Activated T-helper 2 cell treated with anti-CD3 and anti-CD28 coated beads, Interferon-gamma antibody, Interleukin-2, Interleukin-4, amounts not matched to agents 10 μg/mL and 5 μg/mL and 100 μg/mL, durations not matched to agents 14 hours and 24 hours and 36 hours (primary cell): ENCODE measurements at regions of chr14 and their contacts with region 1.

Region 1: DNA sequence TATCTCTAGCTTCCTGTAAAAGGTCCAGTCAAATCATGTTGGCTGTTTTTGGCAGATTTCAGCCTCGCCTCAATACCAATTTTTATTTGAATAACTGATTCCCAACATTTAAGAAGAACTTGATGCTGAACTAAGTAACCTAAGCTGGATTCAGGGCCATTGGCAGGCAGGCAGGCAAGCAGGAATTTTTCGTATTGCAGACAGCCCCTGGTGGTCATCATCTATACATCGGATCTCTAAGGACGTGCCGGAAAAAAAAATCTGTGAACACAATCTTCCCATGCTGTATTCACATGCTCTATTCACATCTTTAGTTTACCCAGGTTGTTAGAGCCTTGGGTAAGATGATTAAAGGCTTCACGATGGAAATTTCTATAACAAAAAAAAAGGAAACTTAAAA is 7.0 kb downstream of the VCPKMT start:
- DNase-seq: no peak
- H3K4me3 Mint-ChIP-seq: no peak overlapping the region
- H3K27ac Mint-ChIP-seq: no peak overlapping the region
- H3K4me1 Mint-ChIP-seq: peaks cover 20% of the 10 kb centered on the region
- H3K27me3 Mint-ChIP-seq: no peaks in the 10 kb centered on the region

Region 2: GRCh38 chr14:49852301-49853157 is 256.8 kb before region 1 on chr14 and contains the start of gene NEMF:
- intact Hi-C with region 1: loop called (anchors 1 kb)
- DNase-seq: peak; percentile 76
- H3K4me3 Mint-ChIP-seq: peak within 1 kb of the TSS; percentile 92
- H3K27ac Mint-ChIP-seq: peak within 1 kb of the TSS; percentile 96
- H3K4me1 Mint-ChIP-seq: peaks cover 34% of the 10 kb centered on the region
- H3K27me3 Mint-ChIP-seq: no peaks in the 10 kb centered on the region
- total RNA-seq, gene NEMF: 75.0 and 81.0 TPM in 2 replicates

Region 3: DNA sequence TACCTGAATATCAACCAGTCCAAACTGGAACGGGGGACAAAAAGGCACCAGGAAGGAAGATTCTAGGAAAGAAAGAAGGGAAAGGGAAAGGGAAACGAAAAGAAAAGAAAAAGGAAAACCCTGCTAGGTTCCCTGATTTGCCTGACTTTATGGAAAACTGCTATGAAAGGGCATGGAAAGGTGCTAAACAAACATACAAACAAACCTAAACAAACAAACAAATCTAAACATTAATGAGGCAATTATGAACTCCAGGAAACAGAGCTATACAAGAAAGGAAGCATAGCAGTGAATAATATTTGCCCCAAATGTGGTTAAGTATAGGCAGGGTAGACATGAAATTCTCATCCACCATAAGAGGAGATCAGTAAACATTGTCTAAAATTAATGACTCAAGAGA is 18.9 kb after region 1 on chr14:
- intact Hi-C with region 1: no loop called
- DNase-seq: no peak
- H3K4me3 Mint-ChIP-seq: no peak overlapping the region
- H3K27ac Mint-ChIP-seq: no peak overlapping the region
- H3K4me1 Mint-ChIP-seq: peaks cover 7% of the 10 kb centered on the region
- H3K27me3 Mint-ChIP-seq: no peaks in the 10 kb centered on the region